ENCODE measurements at regions of chr2 and their contacts with region 1.

Region 1: DNA sequence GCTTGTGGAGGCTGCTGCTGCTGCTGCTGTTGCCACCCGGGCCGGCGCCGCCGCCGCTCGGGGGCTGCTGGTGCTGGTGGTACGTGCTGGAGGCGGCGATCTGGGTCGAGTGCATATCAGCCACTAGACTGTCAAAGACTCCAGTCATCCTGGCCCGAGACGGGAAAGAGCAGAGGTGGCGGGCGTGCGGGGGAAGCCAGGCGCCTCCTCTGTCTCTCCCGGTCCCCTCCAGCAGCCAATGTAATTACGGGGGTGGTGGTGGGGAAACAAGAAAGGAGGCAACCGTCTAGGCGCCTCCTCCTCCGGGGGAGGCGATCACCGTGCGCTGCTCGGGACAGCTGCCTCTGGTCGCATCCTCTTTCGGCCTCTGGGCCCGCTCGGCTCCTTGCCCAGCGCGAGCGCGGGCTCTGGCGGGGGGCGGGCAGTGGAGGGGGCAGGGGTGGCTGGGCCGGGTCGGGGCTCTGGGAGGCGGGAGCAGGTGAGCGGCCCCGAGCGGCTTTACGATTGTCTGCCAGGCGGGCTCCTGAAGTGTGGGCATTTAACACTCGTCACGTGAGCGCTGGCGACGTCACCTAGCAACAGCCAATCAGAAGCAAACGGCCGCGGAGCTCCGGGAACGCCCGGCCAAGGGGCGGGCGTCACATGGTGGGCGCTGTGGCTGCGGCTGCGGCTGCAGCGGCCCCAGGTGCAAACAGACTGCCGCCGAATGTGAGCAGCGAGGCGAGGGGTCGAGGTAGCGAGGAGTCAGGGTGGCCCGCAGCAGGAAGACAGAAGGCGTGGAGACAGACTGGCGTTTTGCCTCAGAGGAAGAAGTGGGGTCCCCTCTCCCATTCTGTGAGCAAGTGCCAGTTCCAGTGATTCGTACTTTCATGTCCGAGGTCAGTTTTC is at the start of gene DLX2:
- DNase-seq: peak; percentile 82
- ATAC-seq: peak; percentile 55
- H3K4me3 ChIP-seq: peak within 1 kb of the TSS; percentile 16 to 51 (median 36)
- H3K4me3 Mint-ChIP-seq: peak within 1 kb of the TSS; percentile 72
- H3K27ac ChIP-seq: no peak within 1 kb of the TSS
- H3K27ac Mint-ChIP-seq: peak within 1 kb of the TSS; percentile 71
- H3K4me1 ChIP-seq: peaks cover 61 to 86% of the 10 kb centered on the region in 2 donors
- H3K4me1 Mint-ChIP-seq: peaks cover 41% of the 10 kb centered on the region
- H3K27me3 ChIP-seq: peaks cover 4 to 100% (median 91%) of the 10 kb centered on the region in 4 experiments
- H3K27me3 Mint-ChIP-seq: peaks cover 49% of the 10 kb centered on the region
- CTCF ChIP-seq: no peak
- total RNA-seq, gene DLX2: 0.52 and 0.61 TPM in 2 replicates

Region 2: GRCh38 chr2:171574149-171574795 is 528.4 kb before region 1 on chr2:
- CTCF ChIA-PET with region 1: interaction called, 6 read pairs
- POLR2A ChIA-PET with region 1: no interaction called
- intact Hi-C with region 1: loop called (anchors 5 kb)
- DNase-seq: peak; percentile 87
- ATAC-seq: peak; percentile 100
- H3K4me3 ChIP-seq: peak overlapping the region in 1 of 5 experiments; percentile 5
- H3K4me3 Mint-ChIP-seq: peak overlapping the region; percentile 37
- H3K27ac ChIP-seq: no peak overlapping the region
- H3K27ac Mint-ChIP-seq: no peak overlapping the region
- H3K4me1 ChIP-seq: peaks cover 0 to 4% of the 10 kb centered on the region in 2 donors
- H3K4me1 Mint-ChIP-seq: peaks cover 6% of the 10 kb centered on the region
- H3K27me3 ChIP-seq: no peaks in the 10 kb centered on the region
- H3K27me3 Mint-ChIP-seq: peaks cover 8% of the 10 kb centered on the region
- CTCF ChIP-seq: peak; percentile 97

Region 3: GRCh38 chr2:171893824-171894611 is 208.6 kb before region 1 on chr2 and contains the start of gene SLC25A12:
- CTCF ChIA-PET with region 1: no interaction called
- POLR2A ChIA-PET with region 1: no interaction called
- intact Hi-C with region 1: no loop called
- DNase-seq: peak; percentile 87
- ATAC-seq: peak; percentile 92
- H3K4me3 ChIP-seq: peak within 1 kb of the TSS; percentile 78 to 93 (median 88)
- H3K4me3 Mint-ChIP-seq: peak within 1 kb of the TSS; percentile 99
- H3K27ac ChIP-seq: peak within 1 kb of the TSS; percentile 69 to 88
- H3K27ac Mint-ChIP-seq: peak within 1 kb of the TSS; percentile 91
- H3K4me1 ChIP-seq: peaks cover 14 to 16% of the 10 kb centered on the region in 2 donors
- H3K4me1 Mint-ChIP-seq: peaks cover 25% of the 10 kb centered on the region
- H3K27me3 ChIP-seq: no peaks in the 10 kb centered on the region
- H3K27me3 Mint-ChIP-seq: no peaks in the 10 kb centered on the region
- CTCF ChIP-seq: no peak
- total RNA-seq, gene SLC25A12: 19.6 and 21.0 TPM in 2 replicates

Region 4: GRCh38 chr2:171922230-171923022 is 180.2 kb before region 1 on chr2 and contains the start of gene HAT1:
- CTCF ChIA-PET with region 1: no interaction called
- POLR2A ChIA-PET with region 1: no interaction called
- intact Hi-C with region 1: loop called (anchors 5 kb)
- DNase-seq: peak; percentile 98
- ATAC-seq: peak; percentile 98
- H3K4me3 ChIP-seq: peak within 1 kb of the TSS; percentile 81 to 98 (median 96)
- H3K4me3 Mint-ChIP-seq: peak within 1 kb of the TSS; percentile 97
- H3K27ac ChIP-seq: peak within 1 kb of the TSS; percentile 87 to 93
- H3K27ac Mint-ChIP-seq: peak within 1 kb of the TSS; percentile 99
- H3K4me1 ChIP-seq: peaks cover 16% of the 10 kb centered on the region in 2 donors
- H3K4me1 Mint-ChIP-seq: peaks cover 31% of the 10 kb centered on the region
- H3K27me3 ChIP-seq: no peaks in the 10 kb centered on the region
- H3K27me3 Mint-ChIP-seq: no peaks in the 10 kb centered on the region
- CTCF ChIP-seq: no peak
- total RNA-seq, gene HAT1: 25.1 and 26.9 TPM in 2 replicates

Region 5: GRCh38 chr2:172084734-172085459 is 17.7 kb before region 1 on chr2:
- CTCF ChIA-PET with region 1: interaction called, 58 read pairs
- POLR2A ChIA-PET with region 1: interaction called, 9 read pairs
- intact Hi-C with region 1: loop called (anchors 1 kb)
- DNase-seq: peak; percentile 64
- ATAC-seq: peak; percentile 22
- H3K4me3 ChIP-seq: peak overlapping the region; percentile 9 to 59 (median 43)
- H3K4me3 Mint-ChIP-seq: peak overlapping the region; percentile 79
- H3K27ac ChIP-seq: no peak overlapping the region
- H3K27ac Mint-ChIP-seq: peak overlapping the region; percentile 41
- H3K4me1 ChIP-seq: peaks cover 61 to 86% of the 10 kb centered on the region in 2 donors
- H3K4me1 Mint-ChIP-seq: peaks cover 46% of the 10 kb centered on the region
- H3K27me3 ChIP-seq: peaks cover 0 to 100% (median 96%) of the 10 kb centered on the region in 4 experiments
- H3K27me3 Mint-ChIP-seq: peaks cover 68% of the 10 kb centered on the region
- CTCF ChIP-seq: no peak

Region 6: DNA sequence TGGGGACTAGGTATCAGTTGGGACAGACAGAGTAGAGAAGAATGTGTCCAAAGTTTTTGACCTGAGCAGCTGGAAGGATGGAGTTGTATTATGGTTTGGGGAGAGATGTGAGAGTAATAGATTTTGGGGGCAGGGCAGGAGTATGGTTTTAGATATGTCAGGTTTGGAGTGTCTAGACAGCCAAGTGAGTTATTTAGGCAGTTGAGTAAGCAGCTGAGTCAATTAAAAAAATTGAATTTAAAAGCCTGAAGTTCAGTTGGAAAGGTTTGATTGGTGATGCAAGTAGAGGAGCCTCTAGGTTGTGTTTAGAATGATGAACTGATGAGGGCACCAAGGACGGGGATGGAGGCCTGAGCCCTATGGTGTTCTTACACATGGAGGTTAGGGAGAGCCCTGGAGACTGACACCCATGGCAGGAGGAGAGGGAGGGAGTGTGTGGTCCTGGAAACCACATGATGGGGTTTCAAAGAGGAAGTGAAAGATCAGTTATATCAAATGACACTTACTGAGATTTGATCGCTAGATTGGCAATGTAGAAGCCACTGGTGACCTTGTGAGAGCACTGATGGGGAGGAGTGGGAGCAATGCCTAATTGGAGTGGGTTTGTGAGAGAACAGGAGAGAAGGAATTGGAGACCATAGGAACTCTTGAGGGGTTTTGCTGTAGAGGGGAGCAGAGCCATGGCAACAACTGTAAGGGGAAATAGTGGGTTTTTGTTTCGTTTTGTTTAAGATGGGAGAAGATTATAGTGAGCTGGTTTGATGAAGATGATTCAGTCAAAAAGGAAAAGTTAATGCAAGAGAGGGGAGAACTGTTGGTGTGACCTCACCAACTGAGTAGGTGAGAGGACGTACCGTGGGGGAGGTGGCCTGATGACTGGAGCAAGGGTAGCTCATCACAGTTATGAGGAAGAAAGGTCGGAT is 335.0 kb after region 1 on chr2:
- CTCF ChIA-PET with region 1: no interaction called
- POLR2A ChIA-PET with region 1: no interaction called
- intact Hi-C with region 1: loop called (anchors 10 kb)
- DNase-seq: peak; percentile 74
- ATAC-seq: peak; percentile 86
- H3K4me3 ChIP-seq: peak overlapping the region in 4 of 5 experiments; percentile 32 to 68 (median 50)
- H3K4me3 Mint-ChIP-seq: no peak overlapping the region
- H3K27ac ChIP-seq: peak overlapping the region in 1 of 2 donors; percentile 38
- H3K27ac Mint-ChIP-seq: no peak overlapping the region
- H3K4me1 ChIP-seq: peaks cover 22 to 25% of the 10 kb centered on the region in 2 donors
- H3K4me1 Mint-ChIP-seq: peaks cover 5% of the 10 kb centered on the region
- H3K27me3 ChIP-seq: peaks cover 0 to 16% (median 7%) of the 10 kb centered on the region in 4 experiments
- H3K27me3 Mint-ChIP-seq: peaks cover 23% of the 10 kb centered on the region
- CTCF ChIP-seq: no peak

Measured in B cell (primary cell).